ENCODE measurements at regions of chr10 and their contacts with region 1.

Region 1: GRCh38 chr10:29735596-29736318 is 101.0 kb upstream of the SVIL start:
- DNase-seq: peak; percentile 84 to 93 (median 88)
- ATAC-seq: peak; percentile 73 to 91 (median 90)
- H3K4me3 ChIP-seq: peak overlapping the region; percentile 42 to 94 (median 85)
- H3K27ac ChIP-seq: peak overlapping the region; percentile 85 to 98 (median 93)
- H3K4me1 ChIP-seq: peaks cover 0 to 31% (median 17%) of the 10 kb centered on the region in 12 donors
- H3K27me3 ChIP-seq: no peaks in the 10 kb centered on the region
- CTCF ChIP-seq: peak; percentile 87 to 97 (median 94)
- POLR2A ChIP-seq: peak in 1 of 2 donors; percentile 33

Region 2: DNA sequence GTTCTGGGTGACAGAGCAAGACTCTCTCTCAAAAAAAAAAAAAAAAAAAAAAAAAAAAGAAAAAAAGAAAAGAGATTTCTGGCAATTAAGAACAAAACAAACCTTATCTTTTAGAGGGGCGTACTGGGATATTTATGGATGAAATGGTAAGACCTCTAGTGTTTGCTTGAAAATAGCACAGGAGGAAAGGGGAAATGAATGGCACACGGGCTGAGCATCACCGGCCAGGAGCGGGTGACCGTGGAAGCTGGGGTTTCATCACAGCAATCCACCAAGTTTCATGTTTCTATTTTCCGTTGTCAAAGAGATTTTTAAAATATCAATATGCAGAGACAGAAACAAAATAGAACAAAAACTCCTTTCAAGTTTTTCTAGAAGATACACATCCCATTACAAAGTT is 206.6 kb before region 1 on chr10:
- intact Hi-C with region 1: loop called in 3 of 10 experiments (anchors 5 to 10 kb)
- DNase-seq: no peak
- ATAC-seq: no peak
- H3K4me3 ChIP-seq: no peak overlapping the region
- H3K27ac ChIP-seq: peak overlapping the region in 2 of 12 donors; percentile 6 to 25
- H3K4me1 ChIP-seq: peaks cover 0 to 18% (median 0%) of the 10 kb centered on the region in 12 donors
- H3K27me3 ChIP-seq: no peaks in the 10 kb centered on the region
- CTCF ChIP-seq: no peak
- POLR2A ChIP-seq: no peak

Region 3: DNA sequence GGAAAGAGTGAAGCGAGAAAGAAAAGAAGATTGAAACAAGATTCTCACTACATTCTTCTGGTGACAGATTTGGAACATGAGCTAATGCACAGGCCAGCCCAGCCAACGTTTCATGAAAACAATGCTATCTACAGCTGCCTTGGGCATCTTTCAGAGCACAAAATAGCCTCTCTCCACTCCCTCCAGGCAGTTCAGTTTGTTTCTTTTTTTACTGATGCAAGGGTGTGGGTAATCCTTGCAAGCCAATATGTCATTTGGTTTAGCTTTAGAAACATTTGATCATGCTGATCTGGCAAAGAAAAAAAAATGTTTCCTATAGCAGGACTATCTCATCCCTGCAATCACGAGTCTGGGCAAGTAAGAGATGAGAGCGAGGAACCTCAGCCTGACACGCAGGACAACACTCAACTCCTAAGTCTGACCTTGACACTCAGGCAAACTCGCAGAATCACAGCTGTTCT is 136.9 kb before region 1 on chr10:
- intact Hi-C with region 1: loop called in 5 of 10 experiments (anchors 5 to 10 kb)
- DNase-seq: peak in 3 of 5 donors; percentile 48 to 63 (median 55)
- ATAC-seq: peak; percentile 82 to 86 (median 84)
- H3K4me3 ChIP-seq: peak overlapping the region in 5 of 12 donors; percentile 1 to 32 (median 15)
- H3K27ac ChIP-seq: peak overlapping the region; percentile 71 to 95 (median 80)
- H3K4me1 ChIP-seq: peaks cover 0 to 89% (median 31%) of the 10 kb centered on the region in 12 donors
- H3K27me3 ChIP-seq: no peaks in the 10 kb centered on the region
- CTCF ChIP-seq: no peak
- POLR2A ChIP-seq: no peak

Region 4: DNA sequence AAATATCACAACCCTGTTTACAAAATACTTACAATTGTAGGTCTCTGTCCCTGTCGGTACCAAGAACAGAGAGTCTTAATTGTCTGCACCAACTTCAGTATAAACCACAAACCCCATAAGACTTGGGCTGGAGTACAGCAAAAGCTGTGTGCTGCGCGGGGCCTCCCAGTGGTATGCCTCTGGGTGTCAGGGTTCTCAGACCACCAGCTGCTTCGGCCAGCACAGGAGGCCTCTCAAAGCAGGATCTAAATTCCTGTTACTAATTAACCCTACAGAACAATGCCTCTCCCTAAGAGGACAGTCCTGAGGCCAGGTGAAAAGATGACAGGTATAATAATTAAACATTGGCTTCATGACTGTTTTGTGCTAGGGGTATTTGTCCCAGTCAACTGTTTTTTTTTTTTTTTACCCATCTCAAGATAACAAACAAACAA is 100.0 kb before region 1 on chr10:
- intact Hi-C with region 1: loop called in 7 of 10 experiments (anchors 5 to 10 kb)
- DNase-seq: no peak
- ATAC-seq: peak in 3 of 4 donors; percentile 26 to 39 (median 35)
- H3K4me3 ChIP-seq: peak overlapping the region in 6 of 12 donors; percentile 8 to 62 (median 36)
- H3K27ac ChIP-seq: peak overlapping the region; percentile 73 to 94 (median 88)
- H3K4me1 ChIP-seq: peaks cover 3 to 45% (median 20%) of the 10 kb centered on the region in 12 donors
- H3K27me3 ChIP-seq: no peaks in the 10 kb centered on the region
- CTCF ChIP-seq: no peak
- POLR2A ChIP-seq: no peak

Region 5: GRCh38 chr10:29841724-29842649 is 106.2 kb after region 1 on chr10:
- intact Hi-C with region 1: loop called in 4 of 10 experiments (anchors 5 to 10 kb)
- DNase-seq: peak in 4 of 5 donors; percentile 75 to 89 (median 82)
- ATAC-seq: peak; percentile 85 to 94 (median 90)
- H3K4me3 ChIP-seq: peak overlapping the region in 2 of 12 donors; percentile 33 to 46
- H3K27ac ChIP-seq: peak overlapping the region in 11 of 12 donors; percentile 48 to 93 (median 79)
- H3K4me1 ChIP-seq: peaks cover 0 to 42% (median 5%) of the 10 kb centered on the region in 12 donors
- H3K27me3 ChIP-seq: no peaks in the 10 kb centered on the region
- CTCF ChIP-seq: no peak
- POLR2A ChIP-seq: peak in 1 of 2 donors; percentile 70

Region 6: DNA sequence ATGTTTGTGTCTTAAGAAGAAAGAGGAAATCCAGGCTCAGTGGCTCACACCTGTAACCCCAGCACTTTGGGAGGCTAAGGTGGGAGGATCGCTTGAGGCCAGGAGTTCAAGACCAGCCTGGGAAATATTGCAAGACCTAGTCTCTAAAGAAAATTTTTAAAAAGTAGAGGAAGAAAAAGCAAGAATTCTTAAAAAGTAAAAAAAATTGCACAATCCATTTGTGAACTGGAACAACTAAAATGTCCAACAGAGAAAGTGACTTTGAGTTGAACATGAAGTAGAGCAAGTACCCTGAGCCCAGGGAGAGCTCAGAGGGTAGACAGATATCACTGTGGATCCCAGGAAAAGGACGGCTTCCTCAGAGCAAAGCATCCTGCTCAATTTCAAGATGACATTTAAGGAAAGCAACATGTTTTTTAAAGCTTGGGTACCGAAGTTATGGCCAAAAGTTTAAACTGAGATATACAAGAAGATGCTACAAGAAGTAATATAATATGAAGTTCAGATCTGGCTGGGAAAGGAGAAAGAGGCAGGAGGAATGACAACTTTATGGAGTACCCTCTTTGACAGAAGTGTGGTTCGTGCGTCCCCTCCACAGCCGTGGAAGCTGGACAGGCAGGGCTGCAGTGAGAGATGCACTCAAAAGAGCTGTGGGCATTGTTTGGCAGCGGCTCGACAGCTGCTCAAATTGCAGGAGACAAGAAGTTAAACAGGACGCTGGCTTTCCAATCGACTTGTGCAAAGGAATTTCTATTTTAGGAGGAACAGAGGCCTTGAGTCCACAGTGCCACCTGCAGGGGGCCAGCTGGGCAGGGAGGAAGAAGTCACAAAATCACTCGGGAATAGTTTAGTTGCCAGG is 122.3 kb after region 1 on chr10:
- intact Hi-C with region 1: loop called in 8 of 10 experiments (anchors 5 kb)
- DNase-seq: peak; percentile 65 to 78 (median 74)
- ATAC-seq: peak; percentile 77 to 94 (median 92)
- H3K4me3 ChIP-seq: no peak overlapping the region
- H3K27ac ChIP-seq: peak overlapping the region in 7 of 12 donors; percentile 9 to 74 (median 33)
- H3K4me1 ChIP-seq: peaks cover 0 to 12% (median 3%) of the 10 kb centered on the region in 12 donors
- H3K27me3 ChIP-seq: no peaks in the 10 kb centered on the region
- CTCF ChIP-seq: peak; percentile 48 to 81 (median 67)
- POLR2A ChIP-seq: no peak